ENCODE measurements at regions of chr10 and their contacts with region 1.

Region 1: DNA sequence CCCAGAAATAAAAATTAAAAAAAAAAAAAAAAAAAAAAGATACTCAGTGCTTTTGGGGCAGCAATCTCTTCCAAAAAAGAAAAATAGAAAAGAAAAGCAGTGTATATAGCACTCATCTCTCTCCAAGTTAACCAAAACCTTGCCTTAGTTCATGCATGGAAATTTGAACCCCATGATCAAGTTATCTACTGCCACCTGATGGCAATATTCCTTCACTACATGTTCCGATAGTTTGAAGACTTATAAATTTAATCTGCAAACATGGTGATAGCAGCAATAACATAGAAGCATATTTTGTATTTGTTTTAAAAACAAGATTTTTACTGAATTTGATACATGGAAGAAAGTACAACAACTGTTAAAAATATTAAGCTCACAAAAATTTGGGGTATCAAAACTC is 48.6 kb upstream of the SLIT1 start:
- DNase-seq: no peak
- H3K4me3 Mint-ChIP-seq: no peak overlapping the region
- H3K27ac Mint-ChIP-seq: no peak overlapping the region
- H3K4me1 Mint-ChIP-seq: peaks cover 19% of the 10 kb centered on the region
- H3K27me3 Mint-ChIP-seq: no peaks in the 10 kb centered on the region

Region 2: GRCh38 chr10:96978621-96979154 is 255.7 kb before region 1 on chr10:
- CTCF ChIA-PET with region 1: no interaction called
- intact Hi-C with region 1: loop called (anchors 1 kb)
- DNase-seq: peak; percentile 28
- H3K4me3 Mint-ChIP-seq: no peak overlapping the region
- H3K27ac Mint-ChIP-seq: peak overlapping the region; percentile 4
- H3K4me1 Mint-ChIP-seq: peaks cover 11% of the 10 kb centered on the region
- H3K27me3 Mint-ChIP-seq: no peaks in the 10 kb centered on the region

Region 3: GRCh38 chr10:97222326-97222961 is 12.0 kb before region 1 on chr10:
- CTCF ChIA-PET with region 1: interaction called, 38 read pairs
- intact Hi-C with region 1: loop called (anchors 1 kb)
- DNase-seq: no peak
- H3K4me3 Mint-ChIP-seq: no peak overlapping the region
- H3K27ac Mint-ChIP-seq: no peak overlapping the region
- H3K4me1 Mint-ChIP-seq: peaks cover 24% of the 10 kb centered on the region
- H3K27me3 Mint-ChIP-seq: no peaks in the 10 kb centered on the region

Region 4: DNA sequence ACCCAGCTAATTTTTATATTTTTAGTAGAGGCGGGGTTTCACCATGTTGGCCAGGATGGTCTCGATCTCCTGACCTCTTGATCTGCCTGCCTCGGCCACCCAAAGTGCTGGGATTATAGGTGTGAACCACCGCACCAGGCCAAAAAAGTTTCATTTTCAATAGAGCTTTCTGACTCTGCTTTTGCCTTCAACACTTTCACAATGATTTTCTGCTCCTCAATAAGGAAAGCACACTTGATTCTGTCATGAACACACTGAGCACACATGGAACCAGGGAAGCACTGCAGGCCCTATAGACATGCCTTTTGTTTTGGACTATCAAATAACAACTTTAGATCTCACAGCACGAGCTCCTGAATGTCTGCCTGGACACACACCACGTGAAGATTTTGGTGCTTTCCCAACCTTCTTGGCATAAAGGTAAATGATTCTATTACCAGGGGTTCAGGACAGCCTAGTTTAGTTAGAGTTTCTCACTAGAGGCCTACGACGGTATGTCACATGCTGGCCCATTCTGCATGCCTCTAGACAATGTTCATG is 158.7 kb after region 1 on chr10:
- CTCF ChIA-PET with region 1: no interaction called
- intact Hi-C with region 1: no loop called
- DNase-seq: no peak
- H3K4me3 Mint-ChIP-seq: no peak overlapping the region
- H3K27ac Mint-ChIP-seq: no peak overlapping the region
- H3K4me1 Mint-ChIP-seq: no peaks in the 10 kb centered on the region
- H3K27me3 Mint-ChIP-seq: no peaks in the 10 kb centered on the region